ENCODE measurements at regions of chr1 and their contacts with region 1.

Region 1: GRCh38 chr1:41381692-41382477 is 20.7 kb downstream of the FOXO6 start:
- DNase-seq: no peak
- H3K4me3 ChIP-seq: peak overlapping the region in 2 of 3 experiments; percentile 14 to 43
- H3K27ac ChIP-seq: no peak overlapping the region
- H3K4me1 ChIP-seq: peaks cover 8% of the 10 kb centered on the region
- H3K27me3 ChIP-seq: no peaks in the 10 kb centered on the region
- CTCF ChIP-seq: no peak

Region 2: GRCh38 chr1:41317366-41317765 is 64.5 kb before region 1 on chr1:
- CTCF ChIA-PET with region 1: no interaction called
- dilution Hi-C with region 1: no loop called
- in situ Hi-C with region 1: no loop called
- intact Hi-C with region 1: loop called (anchors 2 kb)
- DNase-seq: peak; percentile 31
- H3K4me3 ChIP-seq: no peak overlapping the region
- H3K27ac ChIP-seq: no peak overlapping the region
- H3K4me1 ChIP-seq: peaks cover 22% of the 10 kb centered on the region
- H3K27me3 ChIP-seq: no peaks in the 10 kb centered on the region
- CTCF ChIP-seq: no peak

Region 3: GRCh38 chr1:41333146-41333784 is 48.6 kb before region 1 on chr1:
- CTCF ChIA-PET with region 1: no interaction called
- dilution Hi-C with region 1: no loop called
- in situ Hi-C with region 1: no loop called
- intact Hi-C with region 1: no loop called
- DNase-seq: peak; percentile 73
- H3K4me3 ChIP-seq: no peak overlapping the region
- H3K27ac ChIP-seq: no peak overlapping the region
- H3K4me1 ChIP-seq: no peaks in the 10 kb centered on the region
- H3K27me3 ChIP-seq: peaks cover 2% of the 10 kb centered on the region
- CTCF ChIP-seq: no peak

Measured in mammary epithelial cell (primary cell).